Activated naive CD4-positive, alpha-beta T cell treated with anti-CD3 and anti-CD28 coated beads, Interleukin-2, amount 10 ng/mL, durations not matched to agents 7 days and 5 days (primary cell): ENCODE measurements at regions of chrX and their contacts with region 1.

Region 1: DNA sequence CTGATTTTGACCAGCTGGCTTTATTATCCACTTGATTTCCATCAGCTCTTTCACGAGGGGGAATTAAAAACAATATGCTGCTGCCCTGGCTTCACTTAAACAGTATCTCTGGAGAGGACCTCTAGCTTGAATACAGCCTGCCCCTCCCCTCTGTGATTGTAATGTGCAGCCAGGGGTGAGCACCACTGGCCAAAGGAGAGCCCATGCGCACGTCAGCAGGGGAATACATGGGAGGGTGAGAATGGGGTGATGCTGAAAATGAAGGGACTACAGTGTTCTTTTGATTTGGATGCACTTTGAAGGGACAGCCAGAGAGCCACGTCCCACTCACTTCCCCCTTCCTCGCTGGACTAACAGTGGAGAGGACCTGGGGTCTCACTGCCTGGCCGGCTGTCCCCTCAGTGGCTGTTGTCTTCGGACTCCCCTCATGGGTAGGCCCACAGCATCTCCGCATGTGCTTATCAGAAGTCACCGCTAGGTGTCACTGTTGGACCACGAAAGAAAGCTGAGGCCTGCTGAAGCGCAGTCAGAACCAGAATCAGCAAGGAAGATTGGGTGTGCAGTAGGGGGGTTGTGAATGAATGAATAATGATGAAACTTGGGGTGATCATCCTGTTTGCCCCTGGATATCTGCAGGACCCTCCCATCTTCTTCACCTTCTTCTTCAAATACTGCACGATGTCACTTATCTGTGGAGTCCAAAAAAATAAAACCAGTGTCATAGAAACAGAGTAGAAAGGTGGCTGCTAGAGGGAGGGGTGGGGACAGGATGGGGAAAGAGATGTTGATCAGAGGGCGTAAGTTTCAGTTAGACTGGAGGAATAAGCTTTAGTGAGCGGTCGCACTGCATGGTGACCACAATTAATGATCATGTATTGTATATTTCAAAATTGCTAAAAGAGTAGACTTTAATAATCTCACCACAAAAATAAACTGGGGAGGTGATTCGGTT is 32.8 kb downstream of the CLCN4 start:
- DNase-seq: peak; percentile 73
- H3K4me3 Mint-ChIP-seq: no peak overlapping the region
- H3K27ac Mint-ChIP-seq: no peak overlapping the region
- H3K4me1 Mint-ChIP-seq: no peaks in the 10 kb centered on the region
- H3K27me3 Mint-ChIP-seq: peaks cover 16% of the 10 kb centered on the region

Region 2: DNA sequence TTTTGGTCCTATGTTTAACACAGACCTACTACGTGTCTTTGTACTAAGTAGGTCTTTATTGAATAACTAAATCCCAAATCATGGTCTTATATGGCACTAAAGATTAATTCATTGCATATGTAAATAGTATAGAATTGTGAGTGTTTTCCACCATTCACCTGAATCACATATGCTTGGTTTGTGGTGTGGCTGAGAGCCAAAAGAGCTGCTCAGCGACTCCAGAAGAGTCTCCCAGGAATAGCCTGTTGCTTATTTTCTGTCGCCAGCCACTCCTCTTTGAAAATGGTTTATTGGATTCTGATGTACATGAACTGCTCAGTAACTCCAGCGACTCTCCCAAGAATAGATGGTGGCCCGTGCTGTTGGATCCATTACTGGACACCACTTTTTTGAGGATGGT is 151.7 kb after region 1 on chrX:
- CTCF ChIA-PET with region 1: no interaction called
- DNase-seq: no peak
- H3K4me3 Mint-ChIP-seq: no peak overlapping the region
- H3K27ac Mint-ChIP-seq: no peak overlapping the region
- H3K4me1 Mint-ChIP-seq: no peaks in the 10 kb centered on the region
- H3K27me3 Mint-ChIP-seq: no peaks in the 10 kb centered on the region

Region 3: GRCh38 chrX:10447577-10448214 is 258.1 kb after region 1 on chrX:
- CTCF ChIA-PET with region 1: no interaction called
- DNase-seq: no peak
- H3K4me3 Mint-ChIP-seq: no peak overlapping the region
- H3K27ac Mint-ChIP-seq: no peak overlapping the region
- H3K4me1 Mint-ChIP-seq: no peaks in the 10 kb centered on the region
- H3K27me3 Mint-ChIP-seq: no peaks in the 10 kb centered on the region

Region 4: DNA sequence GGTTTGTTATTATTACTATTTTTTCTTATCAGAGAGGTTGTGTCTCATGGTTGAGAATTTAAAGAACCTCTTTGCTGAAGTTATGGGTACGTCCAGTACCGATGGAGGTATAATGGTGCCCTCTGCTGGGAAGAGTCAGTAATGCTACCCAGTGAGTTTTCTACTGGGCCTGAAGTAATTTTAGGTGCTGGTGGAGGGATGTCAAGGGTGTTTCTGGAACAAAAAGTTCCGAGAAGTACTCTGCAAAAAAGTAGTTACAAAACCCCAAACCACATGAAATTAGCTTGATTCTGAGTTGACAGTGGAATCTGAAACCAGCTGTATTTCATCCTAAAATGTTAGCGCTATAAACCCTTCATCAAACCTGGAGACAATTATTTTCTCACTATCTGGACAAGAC is 533.3 kb after region 1 on chrX:
- CTCF ChIA-PET with region 1: interaction called, 35 read pairs
- DNase-seq: peak; percentile 50
- H3K4me3 Mint-ChIP-seq: no peak overlapping the region
- H3K27ac Mint-ChIP-seq: no peak overlapping the region
- H3K4me1 Mint-ChIP-seq: no peaks in the 10 kb centered on the region
- H3K27me3 Mint-ChIP-seq: no peaks in the 10 kb centered on the region